Naive thymus-derived CD4-positive, alpha-beta T cell (primary cell): ENCODE measurements at regions of chr11 and their contacts with region 1.

Region 1: DNA sequence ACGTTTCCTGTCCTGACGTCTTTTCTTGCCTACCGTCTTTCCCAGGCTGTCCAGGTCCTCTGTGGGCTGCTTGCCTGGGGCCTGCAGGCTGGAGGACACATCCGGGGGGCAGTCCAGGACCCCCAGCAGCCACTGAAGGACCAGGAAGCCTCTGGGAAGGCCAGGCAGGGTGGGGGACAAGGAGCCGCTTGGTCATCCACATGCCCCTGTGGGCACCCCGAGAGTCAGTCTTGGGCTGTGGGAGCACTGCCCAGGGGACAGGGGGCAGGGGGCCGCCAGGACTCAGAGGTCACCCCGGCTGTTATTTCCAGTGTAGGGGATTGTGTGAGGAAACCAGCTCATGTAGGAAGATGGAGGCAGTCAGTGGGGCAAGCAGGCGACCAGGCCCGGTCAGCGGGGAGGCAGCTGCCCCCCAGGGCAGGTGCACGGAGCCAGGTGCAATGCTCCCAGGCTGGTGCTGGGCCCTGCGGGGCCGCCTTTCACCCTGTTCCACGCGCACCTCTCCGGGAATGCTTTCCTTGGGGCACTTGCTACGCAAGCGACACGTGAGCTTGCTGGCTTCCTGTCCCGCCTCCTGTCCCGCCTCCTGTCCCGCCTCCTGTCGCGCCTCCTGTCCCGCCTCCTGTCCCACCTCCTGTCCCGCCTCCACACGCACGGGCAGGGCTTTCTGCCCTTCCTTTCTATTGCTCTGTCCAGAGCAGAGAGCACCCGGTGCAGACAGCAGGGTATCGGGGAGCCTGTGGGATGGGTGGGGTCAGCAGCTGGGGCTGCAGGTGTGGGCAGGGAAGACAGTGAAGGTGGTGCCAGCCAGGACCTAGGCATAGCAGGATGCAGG is 39.5 kb downstream of the MUC5B start:
- DNase-seq: peak; percentile 72 to 91 (median 84)
- ATAC-seq: peak; percentile 93
- H3K4me3 ChIP-seq: peak overlapping the region; percentile 77
- H3K4me3 Mint-ChIP-seq: peak overlapping the region; percentile 74 to 90 (median 85)
- H3K27ac ChIP-seq: peak overlapping the region; percentile 89
- H3K27ac Mint-ChIP-seq: peak overlapping the region; percentile 78 to 95 (median 91)
- H3K4me1 ChIP-seq: peaks cover 13 to 15% of the 10 kb centered on the region in 2 donors
- H3K4me1 Mint-ChIP-seq: peaks cover 0 to 34% (median 12%) of the 10 kb centered on the region in 7 donors
- H3K27me3 ChIP-seq: no peaks in the 10 kb centered on the region
- H3K27me3 Mint-ChIP-seq: no peaks in the 10 kb centered on the region

Region 2: DNA sequence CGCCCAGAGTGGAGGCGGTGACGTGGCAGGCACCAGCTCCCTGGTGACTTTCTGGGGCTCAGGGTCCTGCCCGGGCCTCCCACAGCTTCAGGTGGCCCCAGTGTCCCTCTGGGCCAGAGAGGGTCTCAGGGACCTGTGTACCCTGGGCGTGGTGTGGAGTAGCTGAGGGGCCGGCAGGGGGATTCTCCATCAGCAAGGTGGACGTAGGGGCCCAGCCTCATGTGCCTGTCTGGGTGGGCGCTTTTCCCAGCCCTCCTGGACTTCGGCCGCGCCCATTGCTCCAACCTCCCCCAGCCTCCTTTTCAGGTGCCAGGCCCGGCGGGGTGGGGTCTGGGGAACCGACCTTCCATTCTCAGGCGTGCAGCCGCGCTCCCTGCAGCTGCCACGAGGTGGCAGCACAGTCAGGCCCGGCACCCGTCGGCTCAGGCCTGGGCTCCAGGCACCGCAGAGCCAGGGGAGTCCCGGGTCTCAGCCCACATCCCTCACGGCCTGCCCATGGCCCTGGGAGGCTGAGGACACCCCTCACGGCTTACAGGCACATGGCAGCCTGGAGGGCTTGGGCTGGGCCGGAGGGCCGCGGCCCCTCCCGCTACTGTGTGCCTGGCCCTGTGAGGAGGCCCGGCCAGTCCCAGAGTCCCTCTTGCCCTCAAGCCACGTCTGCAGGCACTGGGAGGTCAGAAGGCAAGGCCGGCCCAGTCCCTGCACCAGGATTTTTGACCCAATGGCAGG is 59.4 kb before region 1 on chr11:
- CTCF ChIA-PET with region 1: interaction called, 4 read pairs
- POLR2A ChIA-PET with region 1: no interaction called
- intact Hi-C with region 1: loop called in 1 of 2 experiments (anchors 10 kb)
- DNase-seq: peak in 8 of 9 donors; percentile 34 to 73 (median 60)
- ATAC-seq: peak; percentile 83
- H3K4me3 ChIP-seq: no peak overlapping the region
- H3K4me3 Mint-ChIP-seq: no peak overlapping the region
- H3K27ac ChIP-seq: no peak overlapping the region
- H3K27ac Mint-ChIP-seq: no peak overlapping the region
- H3K4me1 ChIP-seq: no peaks in the 10 kb centered on the region
- H3K4me1 Mint-ChIP-seq: no peaks in the 10 kb centered on the region
- H3K27me3 ChIP-seq: no peaks in the 10 kb centered on the region
- H3K27me3 Mint-ChIP-seq: no peaks in the 10 kb centered on the region

Region 3: DNA sequence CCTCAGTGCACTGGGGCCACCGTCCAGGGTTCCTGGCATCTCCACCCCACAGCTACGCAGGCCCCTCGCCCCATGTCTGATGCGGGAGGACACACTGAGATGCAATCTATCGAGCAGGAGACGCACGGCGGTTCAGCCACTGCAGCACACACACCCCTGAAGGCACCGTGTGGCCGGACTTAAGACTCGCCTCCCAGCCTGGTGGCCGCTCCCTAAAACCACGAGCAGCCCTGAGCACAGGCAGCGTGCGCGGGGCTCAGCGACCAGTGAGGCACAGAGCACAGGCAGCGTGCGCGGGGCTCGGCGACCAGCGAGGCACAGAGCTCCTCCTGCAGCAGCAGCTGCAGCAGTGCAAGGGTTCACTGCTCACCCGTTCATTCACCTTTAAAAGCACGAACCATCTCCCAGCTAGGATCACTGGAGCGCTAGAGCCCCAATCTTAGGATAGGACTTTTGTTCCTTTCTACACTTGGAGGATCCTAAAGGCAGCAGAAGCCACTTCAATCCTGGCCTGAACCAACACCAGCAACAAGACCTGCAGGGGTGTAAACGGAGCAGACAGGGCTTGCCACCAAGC is 15.6 kb after region 1 on chr11:
- CTCF ChIA-PET with region 1: no interaction called
- POLR2A ChIA-PET with region 1: no interaction called
- intact Hi-C with region 1: no loop called
- DNase-seq: no peak
- ATAC-seq: no peak
- H3K4me3 ChIP-seq: no peak overlapping the region
- H3K4me3 Mint-ChIP-seq: no peak overlapping the region
- H3K27ac ChIP-seq: no peak overlapping the region
- H3K27ac Mint-ChIP-seq: peak overlapping the region in 1 of 9 donors; percentile 17
- H3K4me1 ChIP-seq: no peaks in the 10 kb centered on the region
- H3K4me1 Mint-ChIP-seq: peaks cover 0 to 2% (median 0%) of the 10 kb centered on the region in 7 donors
- H3K27me3 ChIP-seq: no peaks in the 10 kb centered on the region
- H3K27me3 Mint-ChIP-seq: no peaks in the 10 kb centered on the region

Region 4: DNA sequence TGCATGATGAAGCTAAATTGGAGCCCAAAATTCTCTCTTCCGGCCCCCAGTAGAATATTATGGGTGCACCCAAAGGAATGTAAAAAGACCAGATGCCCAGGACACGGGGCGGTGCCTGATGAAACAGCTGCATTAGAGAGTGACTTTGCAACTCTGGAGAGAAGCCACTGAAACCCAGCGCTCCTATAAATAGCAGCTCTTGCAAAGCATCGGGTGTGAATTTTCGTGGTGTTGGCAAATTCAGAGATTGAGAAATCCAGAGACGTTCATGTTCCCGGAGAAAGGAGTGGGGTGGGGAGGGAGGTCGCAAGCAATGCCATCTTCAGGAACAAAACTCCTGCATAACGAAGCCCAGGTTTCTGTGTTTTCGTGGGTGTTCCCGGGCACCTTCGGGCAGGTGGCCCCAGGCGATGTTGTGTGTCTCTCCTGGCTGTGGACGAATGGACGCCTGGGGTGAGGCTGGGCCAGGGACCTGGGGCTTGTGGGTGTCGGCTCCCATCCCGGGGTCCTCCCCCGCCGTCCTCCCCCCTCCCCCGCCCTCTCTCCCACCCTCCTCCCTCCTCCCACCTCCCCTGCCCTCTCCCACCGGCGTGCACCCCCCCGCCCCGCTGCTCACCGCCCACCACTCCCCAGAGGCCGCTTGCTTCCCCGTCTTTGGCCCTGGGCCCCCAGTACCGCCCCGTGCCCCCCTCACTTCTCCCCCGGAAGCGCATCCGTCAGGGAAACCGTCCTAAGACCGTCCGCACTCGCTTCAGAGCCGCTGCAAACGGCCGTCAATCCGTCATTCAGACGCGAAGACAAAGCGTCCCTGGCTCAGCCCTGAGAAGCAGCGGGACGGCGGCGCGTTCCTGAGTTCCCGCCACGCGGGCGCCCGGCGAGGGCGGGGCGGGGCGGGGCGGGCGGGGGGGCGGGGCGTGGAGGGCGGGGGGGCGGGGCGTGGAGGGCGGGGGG is 73.7 kb after region 1 on chr11:
- CTCF ChIA-PET with region 1: interaction called, 3 read pairs
- POLR2A ChIA-PET with region 1: interaction called, 5 read pairs
- intact Hi-C with region 1: loop called (anchors 1 kb)
- DNase-seq: peak; percentile 40 to 64 (median 61)
- ATAC-seq: peak; percentile 73
- H3K4me3 ChIP-seq: peak overlapping the region; percentile 59
- H3K4me3 Mint-ChIP-seq: peak overlapping the region; percentile 76 to 89 (median 82)
- H3K27ac ChIP-seq: peak overlapping the region; percentile 45
- H3K27ac Mint-ChIP-seq: peak overlapping the region; percentile 40 to 89 (median 62)
- H3K4me1 ChIP-seq: peaks cover 10% of the 10 kb centered on the region in 2 donors
- H3K4me1 Mint-ChIP-seq: peaks cover 15 to 22% (median 17%) of the 10 kb centered on the region in 7 donors
- H3K27me3 ChIP-seq: no peaks in the 10 kb centered on the region
- H3K27me3 Mint-ChIP-seq: peaks cover 0 to 20% (median 0%) of the 10 kb centered on the region in 5 donors

Region 5: DNA sequence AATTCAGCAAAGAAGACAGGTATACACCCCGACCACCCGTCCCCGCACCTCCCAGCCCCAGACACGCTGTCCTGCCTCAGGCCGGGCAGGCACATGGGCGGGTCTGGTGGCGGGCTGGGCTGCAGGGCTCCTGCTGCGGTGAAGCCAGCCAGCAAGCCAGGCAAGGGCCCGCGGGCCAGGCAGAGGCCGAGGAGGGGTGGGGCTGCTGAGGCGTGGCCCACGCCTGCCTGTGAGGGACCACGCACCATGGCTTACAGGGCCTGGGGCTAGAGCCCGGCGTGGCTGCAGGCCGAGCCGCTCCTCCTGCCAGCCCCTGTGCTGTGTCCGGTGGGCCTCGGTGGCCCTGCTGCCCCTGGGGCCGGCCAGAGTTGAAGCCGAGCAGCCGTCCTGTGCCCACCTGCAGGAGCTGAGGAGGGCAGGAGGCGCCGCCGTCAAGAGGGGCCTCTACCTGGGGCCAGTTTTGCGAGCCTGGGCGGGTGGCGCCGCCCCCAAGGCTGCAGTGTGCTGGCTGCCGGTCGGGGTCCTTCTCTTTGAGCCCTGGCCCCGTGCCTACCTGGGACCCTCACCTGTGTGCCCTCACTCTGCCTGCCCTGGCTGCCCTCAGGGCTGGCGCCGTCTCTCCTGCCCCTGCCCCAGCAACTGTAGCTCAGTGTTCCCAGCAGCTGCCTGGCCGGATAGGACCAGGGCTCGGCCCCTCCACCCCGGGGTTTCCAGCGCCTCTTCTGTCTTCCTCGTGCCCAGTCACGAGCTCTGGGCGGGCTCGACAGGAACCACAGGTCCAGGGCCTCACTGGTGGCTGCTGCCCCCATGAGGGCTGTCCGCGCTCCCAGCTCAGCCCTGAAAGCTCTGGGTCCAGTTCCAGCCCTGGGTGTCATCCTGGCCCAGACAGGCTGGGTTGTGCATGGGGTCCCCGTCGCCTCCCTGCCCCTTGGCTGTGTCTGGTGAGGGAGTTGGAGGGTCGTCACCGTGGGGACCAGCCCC is 185.7 kb after region 1 on chr11:
- CTCF ChIA-PET with region 1: no interaction called
- POLR2A ChIA-PET with region 1: interaction called, 4 read pairs
- intact Hi-C with region 1: loop called in 1 of 2 experiments (anchors 5 kb)
- DNase-seq: no peak
- ATAC-seq: no peak
- H3K4me3 ChIP-seq: no peak overlapping the region
- H3K4me3 Mint-ChIP-seq: no peak overlapping the region
- H3K27ac ChIP-seq: no peak overlapping the region
- H3K27ac Mint-ChIP-seq: no peak overlapping the region
- H3K4me1 ChIP-seq: no peaks in the 10 kb centered on the region
- H3K4me1 Mint-ChIP-seq: peaks cover 0 to 1% (median 0%) of the 10 kb centered on the region in 7 donors
- H3K27me3 ChIP-seq: no peaks in the 10 kb centered on the region
- H3K27me3 Mint-ChIP-seq: peaks cover 0 to 3% (median 0%) of the 10 kb centered on the region in 5 donors